OCI-LY7 (cell line): ENCODE measurements at regions of chr16 and their contacts with region 1.

Region 1: DNA sequence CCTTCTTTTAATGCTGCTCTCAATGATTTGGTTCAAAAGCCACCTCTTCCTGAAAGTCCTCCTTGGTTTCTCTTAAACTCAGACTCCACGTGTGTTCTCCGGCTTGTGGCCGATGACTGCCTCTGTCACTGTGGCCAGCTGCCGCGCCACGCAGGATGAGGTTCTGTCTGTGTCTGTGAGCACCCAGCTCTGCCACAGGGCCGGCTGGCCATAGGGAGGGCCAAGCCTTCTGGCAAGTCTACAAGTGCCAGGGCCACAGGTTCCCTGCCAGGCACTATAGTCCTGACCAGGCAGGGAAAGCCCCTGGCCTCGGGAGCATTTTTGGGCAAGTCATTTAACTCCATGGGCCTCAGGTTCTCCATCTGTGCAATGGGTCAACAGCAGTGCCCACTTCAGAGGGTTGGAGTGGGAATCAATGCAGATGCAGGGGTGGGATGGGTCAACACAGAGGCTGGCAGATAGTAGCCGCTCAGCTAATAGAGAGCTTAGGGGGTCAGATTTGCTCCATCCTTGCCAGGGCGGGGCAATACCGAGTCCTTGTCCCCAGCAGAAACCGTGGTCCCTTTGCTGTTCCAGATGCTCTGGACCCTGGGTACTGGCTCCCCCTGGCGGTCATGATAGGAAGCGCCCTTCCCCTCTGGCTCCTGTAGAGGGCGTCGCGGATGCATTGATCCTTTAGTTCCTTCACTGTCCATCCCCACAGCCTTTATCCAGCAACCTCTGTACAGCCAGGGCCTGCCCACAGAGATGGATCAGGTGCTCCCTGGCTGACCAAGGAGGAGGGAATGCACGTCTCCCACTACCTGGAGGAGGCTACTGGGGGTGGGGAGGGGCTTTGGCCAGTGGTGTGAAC is 19.3 kb upstream of the ADGRG3 start:
- DNase-seq: peak; percentile 76
- H3K4me3 ChIP-seq: no peak overlapping the region
- H3K27ac ChIP-seq: no peak overlapping the region
- H3K4me1 ChIP-seq: no peaks in the 10 kb centered on the region
- CTCF ChIP-seq: peak; percentile 100

Region 2: DNA sequence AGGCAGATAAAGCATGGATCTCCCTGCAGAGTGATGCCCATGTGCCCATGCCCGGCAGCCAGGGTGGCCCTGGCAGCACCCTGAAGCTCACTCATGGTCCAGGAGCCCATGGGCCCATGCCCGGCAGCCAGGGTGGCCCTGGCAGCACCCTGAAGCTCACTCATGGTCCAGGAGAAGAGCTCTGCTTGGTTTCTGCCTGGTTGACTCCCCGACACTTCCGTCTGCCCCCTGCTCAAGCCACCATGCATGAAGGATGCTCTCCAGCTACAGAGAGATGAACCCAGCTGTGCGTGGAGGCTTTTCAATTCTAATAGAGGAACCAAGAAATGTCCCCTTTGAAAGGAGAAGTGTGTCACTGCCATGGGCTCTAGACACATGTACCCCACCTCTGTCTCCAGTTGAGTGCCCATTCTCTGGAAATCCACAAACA is 235.5 kb before region 1 on chr16:
- CTCF ChIA-PET with region 1: no interaction called
- POLR2A ChIA-PET with region 1: no interaction called
- intact Hi-C with region 1: loop called (anchors 10 kb)
- DNase-seq: peak; percentile 94
- H3K4me3 ChIP-seq: peak overlapping the region; percentile 0
- H3K27ac ChIP-seq: peak overlapping the region; percentile 69
- H3K4me1 ChIP-seq: peaks cover 31% of the 10 kb centered on the region
- CTCF ChIP-seq: no peak

Region 3: GRCh38 chr16:57576429-57576870 is 72.4 kb before region 1 on chr16:
- CTCF ChIA-PET with region 1: no interaction called
- POLR2A ChIA-PET with region 1: no interaction called
- intact Hi-C with region 1: loop called (anchors 1 kb)
- DNase-seq: peak; percentile 80
- H3K4me3 ChIP-seq: no peak overlapping the region
- H3K27ac ChIP-seq: no peak overlapping the region
- H3K4me1 ChIP-seq: no peaks in the 10 kb centered on the region
- CTCF ChIP-seq: peak; percentile 90

Region 4: GRCh38 chr16:57600048-57600835 is 48.6 kb before region 1 on chr16:
- CTCF ChIA-PET with region 1: no interaction called
- POLR2A ChIA-PET with region 1: no interaction called
- intact Hi-C with region 1: loop called (anchors 2 kb)
- DNase-seq: peak; percentile 47
- H3K4me3 ChIP-seq: no peak overlapping the region
- H3K27ac ChIP-seq: no peak overlapping the region
- H3K4me1 ChIP-seq: no peaks in the 10 kb centered on the region
- CTCF ChIP-seq: peak; percentile 81

Region 5: DNA sequence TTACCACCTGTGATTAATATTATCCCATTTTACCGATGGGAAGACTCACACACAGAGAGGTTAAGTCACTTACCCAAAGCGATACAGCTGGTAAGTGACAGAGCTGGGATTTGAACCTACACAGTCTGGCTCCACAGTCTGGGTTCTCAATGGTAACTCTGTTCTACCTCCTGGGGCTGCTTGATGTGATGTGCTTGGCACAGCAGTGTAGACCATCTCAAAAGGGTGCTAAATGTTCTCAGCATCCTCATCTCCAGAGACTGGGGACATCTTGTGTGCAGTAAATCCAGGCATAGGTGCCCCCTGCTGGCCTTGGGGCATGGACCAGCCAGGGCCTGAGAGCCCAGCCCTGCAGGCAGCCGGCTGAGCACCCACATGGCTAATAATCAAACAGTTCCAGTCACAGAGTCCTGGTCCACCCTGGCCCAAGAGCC is 71.3 kb after region 1 on chr16:
- CTCF ChIA-PET with region 1: no interaction called
- POLR2A ChIA-PET with region 1: interaction called, 5 read pairs
- intact Hi-C with region 1: loop called (anchors 1 kb)
- DNase-seq: peak; percentile 18
- H3K4me3 ChIP-seq: no peak overlapping the region
- H3K27ac ChIP-seq: no peak overlapping the region
- H3K4me1 ChIP-seq: no peaks in the 10 kb centered on the region
- CTCF ChIP-seq: peak; percentile 53